MCF 10A (cell line): ENCODE measurements at regions of chr1 and their contacts with region 1.

Region 1: DNA sequence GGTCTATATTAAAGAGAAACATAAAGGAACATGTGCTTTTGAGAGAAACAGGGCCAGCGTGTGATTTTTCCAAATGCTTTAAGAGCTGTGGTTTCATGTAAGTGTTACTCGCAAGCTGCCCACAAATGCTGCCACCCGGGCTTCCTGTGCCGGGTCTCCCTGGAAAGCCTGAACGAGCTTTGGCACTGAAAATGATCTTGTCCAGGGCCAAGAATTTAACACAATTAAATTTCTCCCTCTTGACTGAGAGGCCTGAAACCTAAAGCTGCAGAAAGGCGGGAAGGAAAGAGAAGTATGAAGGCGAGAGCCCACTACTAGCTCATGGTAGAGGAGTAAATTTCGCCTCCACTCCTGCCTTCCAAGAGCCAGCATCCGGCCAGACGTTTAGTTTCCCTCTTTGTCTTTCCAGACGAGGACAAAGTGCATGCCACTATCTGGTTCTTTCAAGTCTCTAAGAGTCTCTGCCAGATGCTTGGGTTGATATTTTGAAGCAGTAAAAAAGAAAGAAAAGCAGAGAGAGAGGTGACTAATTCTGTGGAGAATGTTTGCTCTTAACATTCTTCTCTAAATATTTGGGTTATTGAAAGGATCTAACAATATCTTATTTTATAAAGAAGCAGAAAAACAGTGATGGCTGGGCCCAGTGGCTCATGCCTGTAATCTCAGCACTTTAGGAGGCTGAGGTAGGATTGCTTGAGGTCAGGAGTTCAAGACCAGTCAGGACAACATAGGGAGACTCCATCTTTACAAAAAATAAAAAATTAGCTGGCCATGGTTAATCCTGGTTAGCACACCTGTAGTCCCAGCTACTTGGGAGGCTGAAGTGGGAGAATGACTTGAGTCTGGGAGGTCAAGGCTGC is 100.0 kb upstream of the HNRNPU start:
- DNase-seq: peak; percentile 57
- H3K4me3 Mint-ChIP-seq: peak overlapping the region; percentile 35
- H3K27ac Mint-ChIP-seq: peak overlapping the region; percentile 93
- H3K4me1 Mint-ChIP-seq: peaks cover 27% of the 10 kb centered on the region
- H3K27me3 Mint-ChIP-seq: no peaks in the 10 kb centered on the region
- CTCF ChIP-seq: no peak

Region 2: DNA sequence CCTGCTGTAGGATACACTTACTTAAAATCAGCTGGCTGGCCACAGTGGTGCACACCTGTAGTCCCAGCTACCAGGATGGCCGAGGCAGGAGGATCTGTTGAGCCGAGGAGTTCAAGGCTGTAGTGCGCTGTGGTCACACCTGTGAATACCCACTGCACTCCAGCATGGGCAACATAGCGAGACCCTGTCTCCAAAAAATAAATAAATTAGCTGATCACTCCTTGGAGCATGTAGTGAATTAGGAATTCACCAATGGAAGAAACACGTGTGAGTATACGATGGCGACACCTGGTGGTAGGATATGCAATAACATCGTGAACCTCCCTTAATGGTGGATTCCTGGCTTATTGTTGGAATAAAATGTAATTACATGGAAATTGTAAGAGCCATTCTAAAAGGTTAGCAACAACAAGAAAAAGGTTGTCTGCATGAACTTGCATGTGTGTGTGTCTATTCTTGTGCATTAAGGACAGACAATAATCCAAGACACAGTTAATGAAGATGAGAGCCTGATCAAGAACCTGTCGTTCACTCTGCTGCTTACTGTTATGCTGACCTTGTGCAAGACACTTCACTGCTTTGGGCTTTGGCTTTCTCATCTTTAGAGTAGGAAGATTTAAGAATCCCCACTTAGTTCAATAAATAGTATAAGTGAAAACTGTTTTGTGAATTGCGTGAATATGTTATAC is 167.5 kb before region 1 on chr1:
- CTCF ChIA-PET with region 1: no interaction called
- POLR2A ChIA-PET with region 1: no interaction called
- intact Hi-C with region 1: no loop called
- DNase-seq: peak; percentile 89
- H3K4me3 Mint-ChIP-seq: no peak overlapping the region
- H3K27ac Mint-ChIP-seq: no peak overlapping the region
- H3K4me1 Mint-ChIP-seq: peaks cover 5% of the 10 kb centered on the region
- H3K27me3 Mint-ChIP-seq: no peaks in the 10 kb centered on the region
- CTCF ChIP-seq: peak; percentile 92

Region 3: GRCh38 chr1:244835276-244836134 is 128.8 kb before region 1 on chr1 and contains the start of gene COX20:
- CTCF ChIA-PET with region 1: interaction called, 5 read pairs
- POLR2A ChIA-PET with region 1: interaction called, 290 read pairs
- intact Hi-C with region 1: loop called (anchors 1 kb)
- DNase-seq: peak; percentile 98
- H3K4me3 Mint-ChIP-seq: peak within 1 kb of the TSS; percentile 81
- H3K27ac Mint-ChIP-seq: peak within 1 kb of the TSS; percentile 99
- H3K4me1 Mint-ChIP-seq: peaks cover 33% of the 10 kb centered on the region
- H3K27me3 Mint-ChIP-seq: no peaks in the 10 kb centered on the region
- CTCF ChIP-seq: no peak
- total RNA-seq, gene COX20: 44.6 and 46.1 TPM in 2 replicates

Region 4: GRCh38 chr1:244952940-244953339 is 11.4 kb before region 1 on chr1:
- CTCF ChIA-PET with region 1: interaction called, 4 read pairs
- POLR2A ChIA-PET with region 1: interaction called, 50 read pairs
- intact Hi-C with region 1: no loop called
- DNase-seq: peak; percentile 62
- H3K4me3 Mint-ChIP-seq: no peak overlapping the region
- H3K27ac Mint-ChIP-seq: no peak overlapping the region
- H3K4me1 Mint-ChIP-seq: no peaks in the 10 kb centered on the region
- H3K27me3 Mint-ChIP-seq: no peaks in the 10 kb centered on the region
- CTCF ChIP-seq: no peak